SK-N-SH (cell line): ENCODE measurements at regions of chr6 and their contacts with region 1.

Region 1: GRCh38 chr6:35139908-35140655 is 1.1 kb downstream of the TCP11 start:
- DNase-seq: peak; percentile 70
- H3K4me3 ChIP-seq: peak overlapping the region in 1 of 2 experiments; percentile 14; a peak in 1 of 4 replicates
- H3K27ac ChIP-seq: no peak overlapping the region
- H3K4me1 ChIP-seq: no peaks in the 10 kb centered on the region
- H3K27me3 ChIP-seq: no peaks in the 10 kb centered on the region
- CTCF ChIP-seq: peak; percentile 94
- EP300 ChIP-seq: no peak
- RAD21 ChIP-seq: peak; percentile 99

Region 2: GRCh38 chr6:33458676-33459075 is 1681.4 kb before region 1 on chr6:
- CTCF ChIA-PET with region 1: no interaction called
- POLR2A ChIA-PET with region 1: no interaction called
- DNase-seq: no peak
- H3K4me3 ChIP-seq: no peak overlapping the region
- H3K27ac ChIP-seq: no peak overlapping the region
- H3K4me1 ChIP-seq: peaks cover 0 to 10% of the 10 kb centered on the region in 2 experiments; a peak in 1 of 4 replicates
- H3K27me3 ChIP-seq: no peaks in the 10 kb centered on the region
- CTCF ChIP-seq: no peak
- EP300 ChIP-seq: no peak
- RAD21 ChIP-seq: no peak

Region 3: DNA sequence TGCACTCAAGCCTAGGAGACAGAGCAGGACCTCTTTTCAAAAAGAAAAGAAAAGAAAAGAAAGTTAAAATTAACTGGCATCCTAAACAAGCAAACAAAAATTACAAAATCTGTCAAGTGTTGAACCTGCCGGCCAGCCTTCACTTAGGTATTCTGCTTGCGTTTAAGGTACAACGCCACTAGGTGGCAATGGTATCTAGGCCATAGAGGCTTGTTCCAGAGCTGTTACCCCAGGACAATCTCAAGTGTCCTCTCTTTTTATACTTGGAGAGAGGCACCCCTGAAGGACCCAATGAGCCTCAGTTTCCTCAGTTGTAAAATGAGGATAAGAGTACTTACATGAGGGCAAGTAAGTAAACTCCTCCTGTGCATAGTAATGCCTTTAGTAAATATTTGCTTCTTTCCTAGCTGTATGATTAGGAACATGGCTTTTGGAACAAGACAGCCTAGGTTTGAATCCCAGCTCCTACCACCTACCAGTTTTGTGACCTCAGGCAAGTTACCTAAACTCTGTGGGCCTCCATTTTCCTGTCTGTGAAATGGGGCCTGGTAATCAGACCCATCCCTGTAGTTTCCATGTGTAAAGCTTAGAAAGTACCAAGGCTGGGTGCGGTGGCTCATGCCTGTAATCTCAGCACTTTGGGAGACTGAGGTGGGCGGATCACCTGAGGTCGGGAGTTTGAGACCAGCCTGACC is 680.0 kb before region 1 on chr6:
- CTCF ChIA-PET with region 1: interaction called, 10 read pairs
- POLR2A ChIA-PET with region 1: no interaction called
- DNase-seq: peak; percentile 63
- H3K4me3 ChIP-seq: no peak overlapping the region
- H3K27ac ChIP-seq: no peak overlapping the region
- H3K4me1 ChIP-seq: peaks cover 0 to 3% of the 10 kb centered on the region in 2 experiments; a peak in 1 of 4 replicates
- H3K27me3 ChIP-seq: no peaks in the 10 kb centered on the region
- CTCF ChIP-seq: peak; percentile 55
- EP300 ChIP-seq: no peak
- RAD21 ChIP-seq: peak; percentile 87

Region 4: GRCh38 chr6:34986845-34987246 is 153.2 kb before region 1 on chr6:
- CTCF ChIA-PET with region 1: interaction called, 108 read pairs
- POLR2A ChIA-PET with region 1: no interaction called
- DNase-seq: peak; percentile 66
- H3K4me3 ChIP-seq: peak overlapping the region in 1 of 2 experiments; percentile 45; a peak in 1 of 4 replicates
- H3K27ac ChIP-seq: no peak overlapping the region
- H3K4me1 ChIP-seq: peaks cover 0 to 4% of the 10 kb centered on the region in 2 experiments; a peak in 2 of 4 replicates
- H3K27me3 ChIP-seq: no peaks in the 10 kb centered on the region
- CTCF ChIP-seq: peak; percentile 88
- EP300 ChIP-seq: no peak
- RAD21 ChIP-seq: peak; percentile 87

Region 5: GRCh38 chr6:35128496-35128895 is 11.6 kb before region 1 on chr6:
- CTCF ChIA-PET with region 1: interaction called, 23 read pairs
- POLR2A ChIA-PET with region 1: no interaction called
- DNase-seq: no peak
- H3K4me3 ChIP-seq: no peak overlapping the region
- H3K27ac ChIP-seq: no peak overlapping the region
- H3K4me1 ChIP-seq: no peaks in the 10 kb centered on the region
- H3K27me3 ChIP-seq: no peaks in the 10 kb centered on the region; the same call in 1 of the 2 replicates
- CTCF ChIP-seq: no peak
- EP300 ChIP-seq: no peak
- RAD21 ChIP-seq: no peak

Region 6: DNA sequence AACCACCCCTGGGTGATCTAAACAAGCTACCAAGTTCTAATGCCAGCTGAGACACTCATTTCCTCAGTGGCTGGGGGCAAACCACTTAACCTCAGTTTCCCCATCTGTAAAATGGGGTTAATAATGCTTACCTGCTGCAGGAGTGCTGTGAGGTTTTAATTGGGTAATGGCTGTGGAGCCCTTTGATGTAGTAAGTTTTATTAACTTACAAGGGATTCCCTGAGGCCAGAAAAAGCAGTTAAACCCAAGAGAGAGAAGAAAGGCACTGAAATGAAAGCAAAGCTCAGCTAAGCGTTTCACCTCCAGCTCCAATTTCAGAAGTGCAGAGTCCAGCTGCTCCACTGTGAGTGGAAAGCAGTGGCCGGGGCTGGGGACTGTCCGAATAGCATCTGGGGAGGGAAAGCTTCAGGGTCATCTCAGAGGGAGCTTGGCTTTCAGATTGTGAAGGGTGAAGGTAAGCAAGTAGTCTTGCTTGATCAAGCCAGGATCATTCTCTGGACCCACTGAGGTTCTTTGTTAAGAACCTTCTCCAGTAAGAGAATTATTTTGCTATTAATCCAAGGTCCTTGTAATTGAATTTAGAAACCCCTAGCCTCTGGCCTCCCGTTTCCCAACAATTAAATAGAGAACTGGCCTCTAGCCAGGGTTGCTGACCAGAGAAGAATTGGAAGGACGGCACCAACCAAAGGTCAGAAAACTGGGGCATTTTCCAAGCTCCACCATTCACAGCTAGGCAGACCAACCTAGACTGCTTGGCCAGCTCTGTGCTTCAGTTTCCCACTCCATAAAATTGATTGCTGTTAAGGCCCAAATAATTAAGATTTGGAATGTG is 21.9 kb after region 1 on chr6:
- CTCF ChIA-PET with region 1: interaction called, 28 read pairs
- POLR2A ChIA-PET with region 1: no interaction called
- DNase-seq: peak; percentile 34
- H3K4me3 ChIP-seq: no peak overlapping the region
- H3K27ac ChIP-seq: no peak overlapping the region
- H3K4me1 ChIP-seq: peaks cover 0 to 26% of the 10 kb centered on the region in 2 experiments; a peak in 2 of 4 replicates
- H3K27me3 ChIP-seq: no peaks in the 10 kb centered on the region
- CTCF ChIP-seq: no peak
- EP300 ChIP-seq: no peak
- RAD21 ChIP-seq: no peak

Region 7: DNA sequence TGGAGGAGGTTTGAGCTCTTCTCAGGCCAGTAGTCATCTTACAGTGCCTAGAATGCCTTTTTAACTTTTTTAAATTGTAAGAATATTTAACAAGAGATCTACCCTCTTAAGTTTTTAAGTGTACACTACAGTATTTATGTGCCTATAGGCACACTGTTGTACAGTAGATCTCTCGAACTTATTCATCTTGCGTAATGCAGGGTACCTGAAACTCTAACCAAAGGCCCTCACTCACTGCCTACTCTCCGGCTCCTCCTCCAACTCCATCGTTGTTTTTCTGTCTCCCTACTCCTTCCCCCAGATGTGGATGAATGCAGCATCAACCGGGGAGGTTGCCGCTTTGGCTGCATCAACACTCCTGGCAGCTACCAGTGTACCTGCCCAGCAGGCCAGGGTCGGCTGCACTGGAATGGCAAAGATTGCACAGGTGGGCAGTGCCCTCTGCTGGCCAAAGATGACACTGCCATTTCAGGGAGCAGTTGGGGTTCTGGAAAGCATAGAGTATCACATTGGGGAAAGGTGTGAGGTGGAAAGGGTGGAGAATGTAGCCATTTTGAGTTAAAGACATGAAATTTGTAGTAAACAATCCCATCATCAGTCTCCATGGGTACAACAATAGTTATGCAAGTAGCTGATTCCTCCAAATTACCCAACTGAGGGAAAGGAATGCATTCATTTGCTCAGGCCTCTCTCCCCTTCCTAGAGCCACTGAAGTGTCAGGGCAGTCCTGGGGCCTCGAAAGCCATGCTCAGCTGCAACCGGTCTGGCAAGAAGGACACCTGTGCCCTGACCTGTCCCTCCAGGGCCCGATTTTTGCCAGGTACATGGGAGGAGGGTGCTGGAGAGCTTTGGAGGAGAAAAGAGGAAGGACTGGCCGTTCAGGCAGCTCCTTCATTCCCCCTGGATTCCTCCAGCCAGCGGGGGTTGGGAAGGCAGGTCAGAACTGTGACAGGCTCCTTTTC is 101.0 kb after region 1 on chr6:
- CTCF ChIA-PET with region 1: interaction called, 148 read pairs
- POLR2A ChIA-PET with region 1: no interaction called
- DNase-seq: peak; percentile 84
- H3K4me3 ChIP-seq: no peak overlapping the region; a peak in 1 of 4 replicates
- H3K27ac ChIP-seq: no peak overlapping the region
- H3K4me1 ChIP-seq: peaks cover 0 to 12% of the 10 kb centered on the region in 2 experiments; a peak in 1 of 4 replicates
- H3K27me3 ChIP-seq: no peaks in the 10 kb centered on the region
- CTCF ChIP-seq: peak; percentile 98
- EP300 ChIP-seq: no peak
- RAD21 ChIP-seq: peak; percentile 94